ENCODE measurements at regions of chr13 and their contacts with region 1.

Region 1: GRCh38 chr13:40770934-40771618 is at the start of gene MRPS31:
- DNase-seq: peak; percentile 98
- H3K4me3 Mint-ChIP-seq: peak within 1 kb of the TSS; percentile 98
- H3K27ac Mint-ChIP-seq: peak within 1 kb of the TSS; percentile 98
- H3K4me1 Mint-ChIP-seq: peaks cover 30% of the 10 kb centered on the region
- H3K27me3 Mint-ChIP-seq: no peaks in the 10 kb centered on the region
- total RNA-seq, gene MRPS31: 46.3 TPM in 2 replicates

Region 2: DNA sequence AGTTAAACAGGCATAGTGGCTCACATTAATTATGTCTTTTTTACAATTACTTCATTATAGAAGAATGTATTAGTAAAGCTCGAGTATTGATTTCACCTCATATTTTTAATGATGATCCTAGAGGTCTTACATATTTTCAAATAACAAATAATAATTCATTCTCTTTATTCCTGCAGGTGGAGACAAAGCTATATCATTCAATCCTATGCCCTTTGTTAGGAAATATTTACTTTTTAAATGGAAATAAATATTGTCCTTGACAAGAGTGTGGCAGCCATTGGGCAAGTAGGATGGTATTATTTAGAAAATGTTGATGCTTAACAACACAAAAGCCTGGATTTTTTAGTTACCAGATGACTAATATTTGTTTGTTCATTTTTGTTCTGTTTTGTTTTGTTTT is 988.0 kb before region 1 on chr13:
- intact Hi-C with region 1: loop called (anchors 1 kb)
- DNase-seq: no peak
- H3K4me3 Mint-ChIP-seq: no peak overlapping the region
- H3K27ac Mint-ChIP-seq: no peak overlapping the region
- H3K4me1 Mint-ChIP-seq: peaks cover 29% of the 10 kb centered on the region
- H3K27me3 Mint-ChIP-seq: no peaks in the 10 kb centered on the region

Region 3: GRCh38 chr13:40336228-40337221 is 434.6 kb before region 1 on chr13:
- intact Hi-C with region 1: no loop called
- DNase-seq: no peak
- H3K4me3 Mint-ChIP-seq: no peak overlapping the region
- H3K27ac Mint-ChIP-seq: no peak overlapping the region
- H3K4me1 Mint-ChIP-seq: peaks cover 13% of the 10 kb centered on the region
- H3K27me3 Mint-ChIP-seq: peaks cover 1% of the 10 kb centered on the region

Region 4: GRCh38 chr13:40789275-40790133 is 18.4 kb after region 1 on chr13 and contains the start of gene SLC25A15:
- intact Hi-C with region 1: loop called (anchors 2 kb)
- DNase-seq: peak; percentile 94
- H3K4me3 Mint-ChIP-seq: peak within 1 kb of the TSS; percentile 79
- H3K27ac Mint-ChIP-seq: peak within 1 kb of the TSS; percentile 80
- H3K4me1 Mint-ChIP-seq: peaks cover 21% of the 10 kb centered on the region
- H3K27me3 Mint-ChIP-seq: no peaks in the 10 kb centered on the region
- total RNA-seq, gene SLC25A15: 22.8 and 24.2 TPM in 2 replicates

Region 5: GRCh38 chr13:40886017-40886416 is 114.9 kb after region 1 on chr13:
- intact Hi-C with region 1: no loop called
- DNase-seq: no peak
- H3K4me3 Mint-ChIP-seq: no peak overlapping the region
- H3K27ac Mint-ChIP-seq: no peak overlapping the region
- H3K4me1 Mint-ChIP-seq: peaks cover 13% of the 10 kb centered on the region
- H3K27me3 Mint-ChIP-seq: no peaks in the 10 kb centered on the region

Measured in activated CD4-positive, alpha-beta T cell treated with anti-CD3 and anti-CD28 coated beads, Interleukin-2, amount 10 ng/mL, durations not matched to agents 24 days and 14 days (primary cell).